HEK293T (cell line): ENCODE measurements at regions of chr15 and their contacts with region 1.

Region 1: DNA sequence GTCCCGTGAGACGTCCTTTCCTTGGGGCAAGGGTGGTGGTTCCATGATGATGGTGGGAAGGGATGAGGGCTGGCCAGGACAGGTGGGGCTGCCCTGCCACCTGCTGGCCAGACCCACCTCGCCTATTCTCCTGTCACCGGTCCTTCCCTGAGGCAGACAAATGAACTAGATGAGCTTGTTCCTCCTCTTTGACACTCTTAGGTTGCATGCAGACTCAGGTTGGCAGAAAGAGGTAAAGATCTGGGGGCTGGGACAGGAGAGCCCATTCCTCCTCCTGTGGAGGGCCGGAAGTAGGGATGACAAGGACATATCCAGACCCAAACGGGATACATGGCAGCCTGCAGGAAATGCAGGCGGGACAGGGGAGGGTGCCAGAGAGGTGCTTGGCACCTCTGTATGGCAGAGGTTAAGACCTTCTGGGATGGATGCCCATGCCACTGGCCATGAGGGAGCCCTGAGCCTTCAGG is 38.6 kb downstream of the ACSBG1 start:
- DNase-seq: peak; percentile 75

Region 2: GRCh38 chr15:78108299-78109084 is 87.3 kb before region 1 on chr15:
- CTCF ChIA-PET with region 1: interaction called, 13 read pairs
- POLR2A ChIA-PET with region 1: no interaction called
- DNase-seq: peak; percentile 82

Region 3: DNA sequence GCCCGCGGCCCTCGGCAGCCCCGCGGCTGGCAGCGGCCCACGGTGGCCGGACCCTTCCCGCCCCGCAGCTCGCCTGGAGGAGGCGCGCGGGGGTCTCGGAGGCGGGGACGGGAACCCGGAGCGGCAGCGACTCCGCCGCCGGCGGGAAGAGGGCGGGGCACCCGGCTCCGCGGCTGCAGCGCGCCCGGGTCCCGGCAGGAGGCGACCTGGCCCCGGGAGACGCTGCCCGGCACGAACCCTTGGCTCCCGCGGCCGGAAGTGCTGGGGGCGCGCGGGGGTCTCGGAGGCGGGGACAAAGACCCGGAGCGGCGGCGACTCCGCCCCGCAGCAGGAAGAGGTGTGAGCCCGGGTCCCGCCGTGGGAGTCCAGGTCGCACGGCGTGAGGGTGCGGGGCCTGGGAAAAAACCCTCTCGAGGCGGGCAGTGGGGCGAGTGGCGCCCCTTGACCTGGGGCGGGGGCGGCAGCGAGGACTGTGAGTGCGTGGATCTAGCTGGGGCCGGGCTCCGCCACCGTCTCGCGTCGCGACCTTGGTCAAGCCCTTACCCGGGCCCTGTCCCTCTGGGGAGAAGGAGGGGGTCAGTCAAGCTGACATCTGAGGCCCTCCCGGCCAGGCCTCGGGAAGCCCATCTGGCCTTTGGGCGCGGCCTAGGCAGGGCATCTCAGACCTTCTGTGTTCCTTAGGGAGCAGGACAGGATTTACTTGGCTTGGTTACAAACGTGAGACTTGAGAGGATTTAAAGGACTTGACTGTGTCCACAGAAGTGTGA is 64.3 kb before region 1 on chr15 and contains the start of gene CIB2:
- CTCF ChIA-PET with region 1: interaction called, 10 read pairs
- POLR2A ChIA-PET with region 1: no interaction called
- DNase-seq: peak; percentile 95

Region 4: DNA sequence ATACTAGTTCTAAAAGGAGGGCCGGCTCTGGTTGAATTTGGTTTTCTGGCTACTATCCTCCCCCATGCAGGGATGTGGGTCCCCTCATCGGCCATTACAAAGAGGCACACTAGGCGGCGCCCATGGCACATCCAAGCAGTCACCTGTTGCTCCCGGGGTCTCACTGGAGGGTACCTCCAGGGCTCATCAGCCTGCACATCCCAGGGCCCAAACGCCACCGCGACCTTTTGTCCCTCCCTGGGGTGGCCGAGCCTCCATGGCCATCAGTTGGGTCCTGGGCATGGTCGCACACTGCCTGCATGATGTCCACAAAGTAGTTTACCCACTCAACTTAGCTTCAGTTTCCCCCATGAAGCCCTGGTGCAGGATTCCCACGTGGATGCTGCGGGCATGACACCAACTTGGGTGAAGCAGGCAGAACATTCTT is 18.3 kb before region 1 on chr15:
- CTCF ChIA-PET with region 1: interaction called, 17 read pairs
- POLR2A ChIA-PET with region 1: no interaction called
- DNase-seq: peak; percentile 79

Region 5: DNA sequence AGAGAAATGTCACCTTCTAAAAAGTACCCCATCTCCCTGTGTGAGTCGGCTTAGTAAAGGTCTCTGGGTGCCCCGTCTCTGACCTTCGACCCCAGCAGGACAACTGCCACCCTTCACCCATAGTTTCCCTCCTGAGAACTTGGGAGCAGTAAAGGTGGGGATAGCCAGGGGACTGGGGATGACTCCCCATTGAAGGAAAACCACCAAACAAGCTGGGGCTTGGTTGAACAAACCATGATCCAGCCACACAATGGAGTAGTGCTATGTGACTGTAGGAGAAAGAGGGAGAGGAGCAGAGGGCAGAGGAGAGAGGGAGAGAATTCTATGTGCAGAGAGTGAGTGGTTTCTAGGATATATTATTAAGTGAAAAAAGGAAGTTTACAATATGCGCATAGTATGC is 12.9 kb before region 1 on chr15:
- CTCF ChIA-PET with region 1: interaction called, 17 read pairs
- POLR2A ChIA-PET with region 1: no interaction called
- DNase-seq: no peak

Region 6: GRCh38 chr15:78212546-78213424 is 17.0 kb after region 1 on chr15:
- CTCF ChIA-PET with region 1: interaction called, 14 read pairs
- POLR2A ChIA-PET with region 1: interaction called, 3 read pairs
- DNase-seq: peak; percentile 62

Region 7: GRCh38 chr15:78241007-78241406 is 45.2 kb after region 1 on chr15:
- CTCF ChIA-PET with region 1: interaction called, 21 read pairs
- POLR2A ChIA-PET with region 1: no interaction called
- DNase-seq: peak; percentile 94